ENCODE measurements at regions of chr4 and their contacts with region 1.

Region 1: GRCh38 chr4:30714408-30715027 is 5.7 kb upstream of the PCDH7 start:
- DNase-seq: peak; percentile 77
- H3K4me3 Mint-ChIP-seq: no peak overlapping the region
- H3K27ac Mint-ChIP-seq: no peak overlapping the region
- H3K4me1 Mint-ChIP-seq: peaks cover 10% of the 10 kb centered on the region
- H3K27me3 Mint-ChIP-seq: no peaks in the 10 kb centered on the region
- CTCF ChIP-seq: peak; percentile 59

Region 2: DNA sequence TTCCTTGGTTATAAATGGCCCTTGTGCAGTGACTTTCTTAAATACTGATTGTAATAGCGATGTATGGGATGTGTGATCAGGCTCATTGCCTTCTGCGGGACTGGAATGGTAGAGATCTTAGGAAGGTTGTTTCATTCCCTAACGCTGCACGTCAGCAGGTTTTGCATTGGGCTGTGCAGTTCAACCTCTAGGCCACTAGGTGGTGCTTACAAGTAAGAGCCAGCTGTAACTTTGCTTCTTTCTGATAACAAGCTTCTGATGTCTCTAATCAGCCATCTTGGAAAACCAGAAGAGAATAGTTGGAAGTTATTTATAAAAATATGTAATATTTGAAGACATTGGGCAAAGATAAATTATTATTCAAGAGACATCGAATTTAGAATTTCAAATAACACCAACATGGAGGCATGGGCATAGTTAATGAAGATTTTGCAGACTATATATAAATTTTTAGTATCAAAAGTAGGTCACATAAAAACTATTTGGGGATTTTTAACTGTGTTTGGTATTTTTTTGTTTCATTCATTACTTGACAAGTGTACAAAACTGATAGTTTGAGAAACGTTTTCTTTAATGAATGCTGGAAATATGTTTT is 334.0 kb before region 1 on chr4:
- CTCF ChIA-PET with region 1: no interaction called
- POLR2A ChIA-PET with region 1: interaction called, 4 read pairs
- intact Hi-C with region 1: loop called (anchors 5 kb)
- DNase-seq: peak; percentile 55
- H3K4me3 Mint-ChIP-seq: no peak overlapping the region
- H3K27ac Mint-ChIP-seq: no peak overlapping the region
- H3K4me1 Mint-ChIP-seq: no peaks in the 10 kb centered on the region
- H3K27me3 Mint-ChIP-seq: no peaks in the 10 kb centered on the region
- CTCF ChIP-seq: peak; percentile 83

Region 3: GRCh38 chr4:30948653-30949052 is 234.1 kb after region 1 on chr4:
- CTCF ChIA-PET with region 1: interaction called, 3 read pairs
- POLR2A ChIA-PET with region 1: interaction called, 20 read pairs
- intact Hi-C with region 1: loop called (anchors 2 kb)
- DNase-seq: peak; percentile 88
- H3K4me3 Mint-ChIP-seq: no peak overlapping the region
- H3K27ac Mint-ChIP-seq: no peak overlapping the region
- H3K4me1 Mint-ChIP-seq: peaks cover 36% of the 10 kb centered on the region
- H3K27me3 Mint-ChIP-seq: no peaks in the 10 kb centered on the region
- CTCF ChIP-seq: no peak

Region 4: GRCh38 chr4:31204895-31205294 is 490.4 kb after region 1 on chr4:
- CTCF ChIA-PET with region 1: no interaction called
- POLR2A ChIA-PET with region 1: no interaction called
- intact Hi-C with region 1: loop called (anchors 10 kb)
- DNase-seq: no peak
- H3K4me3 Mint-ChIP-seq: no peak overlapping the region
- H3K27ac Mint-ChIP-seq: no peak overlapping the region
- H3K4me1 Mint-ChIP-seq: no peaks in the 10 kb centered on the region
- H3K27me3 Mint-ChIP-seq: no peaks in the 10 kb centered on the region
- CTCF ChIP-seq: no peak

Region 5: GRCh38 chr4:31674313-31674947 is 959.9 kb after region 1 on chr4:
- CTCF ChIA-PET with region 1: interaction called, 6 read pairs
- POLR2A ChIA-PET with region 1: interaction called, 3 read pairs
- intact Hi-C with region 1: loop called (anchors 5 kb)
- DNase-seq: peak; percentile 43
- H3K4me3 Mint-ChIP-seq: no peak overlapping the region
- H3K27ac Mint-ChIP-seq: no peak overlapping the region
- H3K4me1 Mint-ChIP-seq: no peaks in the 10 kb centered on the region
- H3K27me3 Mint-ChIP-seq: no peaks in the 10 kb centered on the region
- CTCF ChIP-seq: peak; percentile 56

Measured in MCF 10A (cell line).